ENCODE measurements at regions of chr9 and their contacts with region 1.

Region 1: DNA sequence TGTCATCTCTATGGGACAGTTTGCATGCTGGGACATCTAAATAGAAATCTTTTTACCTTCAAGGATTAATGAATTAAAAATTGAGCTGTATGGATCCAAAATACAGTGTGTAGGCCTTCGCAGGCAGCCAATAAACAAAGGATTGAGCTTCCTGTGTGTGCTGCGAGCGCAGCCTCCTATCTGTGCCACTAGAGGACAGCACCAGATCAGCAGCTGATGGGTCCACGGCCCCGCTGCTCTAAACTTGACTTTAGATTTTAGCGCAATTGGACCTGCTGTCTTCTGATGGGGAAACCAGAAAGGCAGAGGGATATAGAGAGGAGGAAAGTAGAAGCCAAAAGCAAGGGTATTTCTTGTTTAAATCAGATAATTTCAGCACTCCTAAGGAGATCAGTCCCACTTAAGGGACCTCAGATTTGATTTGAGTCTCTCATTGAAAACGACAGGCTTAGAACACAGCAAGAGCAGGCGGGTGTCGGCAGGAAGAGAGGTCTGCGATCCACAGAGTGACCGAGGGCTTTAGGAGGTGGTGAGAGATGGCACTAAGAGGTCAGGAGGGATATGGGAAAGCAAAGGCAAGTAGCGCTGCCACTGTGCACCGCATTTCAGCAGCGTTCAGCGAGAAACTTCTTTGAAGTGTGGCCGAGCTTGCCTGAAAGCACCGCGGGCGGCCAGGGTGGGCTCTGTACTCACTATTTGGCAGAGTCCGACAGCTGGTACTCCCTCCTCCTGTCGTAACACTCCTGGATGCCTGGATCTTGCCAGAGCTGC is 214.3 kb downstream of the GNA14 start:
- DNase-seq: peak; percentile 68
- H3K4me3 ChIP-seq: no peak overlapping the region
- H3K27ac ChIP-seq: no peak overlapping the region
- H3K4me1 ChIP-seq: peaks cover 16% of the 10 kb centered on the region
- H3K27me3 ChIP-seq: no peaks in the 10 kb centered on the region
- CTCF ChIP-seq: peak; percentile 96
- POLR2A ChIP-seq: no peak

Region 2: GRCh38 chr9:77163884-77164283 is 270.0 kb before region 1 on chr9:
- CTCF ChIA-PET with region 1: interaction called, 21 read pairs
- POLR2A ChIA-PET with region 1: no interaction called
- dilution Hi-C with region 1: no loop called
- intact Hi-C with region 1: no loop called
- DNase-seq: peak; percentile 64
- H3K4me3 ChIP-seq: no peak overlapping the region
- H3K27ac ChIP-seq: no peak overlapping the region
- H3K4me1 ChIP-seq: peaks cover 17% of the 10 kb centered on the region
- H3K27me3 ChIP-seq: no peaks in the 10 kb centered on the region
- CTCF ChIP-seq: no peak
- POLR2A ChIP-seq: no peak

Region 3: GRCh38 chr9:77417566-77417965 is 16.3 kb before region 1 on chr9:
- CTCF ChIA-PET with region 1: interaction called, 36 read pairs
- POLR2A ChIA-PET with region 1: no interaction called
- dilution Hi-C with region 1: no loop called
- intact Hi-C with region 1: no loop called
- DNase-seq: peak; percentile 72
- H3K4me3 ChIP-seq: no peak overlapping the region
- H3K27ac ChIP-seq: peak overlapping the region; percentile 24
- H3K4me1 ChIP-seq: peaks cover 45% of the 10 kb centered on the region
- H3K27me3 ChIP-seq: no peaks in the 10 kb centered on the region
- CTCF ChIP-seq: no peak
- POLR2A ChIP-seq: no peak

Region 4: GRCh38 chr9:77488439-77489126 is 54.7 kb after region 1 on chr9:
- CTCF ChIA-PET with region 1: interaction called, 23 read pairs
- POLR2A ChIA-PET with region 1: no interaction called
- dilution Hi-C with region 1: no loop called
- intact Hi-C with region 1: no loop called
- DNase-seq: peak; percentile 18
- H3K4me3 ChIP-seq: no peak overlapping the region
- H3K27ac ChIP-seq: no peak overlapping the region
- H3K4me1 ChIP-seq: no peaks in the 10 kb centered on the region
- H3K27me3 ChIP-seq: no peaks in the 10 kb centered on the region
- CTCF ChIP-seq: peak; percentile 23 to 41
- POLR2A ChIP-seq: no peak

Region 5: DNA sequence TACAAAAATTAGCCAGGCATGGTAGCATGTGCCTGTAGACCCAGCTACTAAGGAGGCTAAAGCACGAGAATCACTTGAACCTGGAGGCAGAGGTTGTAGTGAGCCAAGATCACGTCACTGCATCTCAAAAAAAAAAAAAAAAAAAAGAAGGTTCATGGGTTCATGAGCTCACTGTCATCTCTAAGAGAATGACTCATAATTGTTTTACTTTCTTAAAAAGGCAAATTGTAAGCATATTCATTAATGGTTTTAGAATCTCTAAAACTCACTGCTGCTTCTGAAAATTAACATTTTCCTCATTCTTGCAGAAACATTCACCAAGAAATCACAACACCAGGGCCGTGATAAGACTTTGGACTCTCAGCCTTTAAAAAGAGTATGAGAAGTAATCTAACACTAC is 110.7 kb after region 1 on chr9:
- CTCF ChIA-PET with region 1: no interaction called
- POLR2A ChIA-PET with region 1: no interaction called
- dilution Hi-C with region 1: no loop called
- intact Hi-C with region 1: no loop called
- DNase-seq: no peak
- H3K4me3 ChIP-seq: no peak overlapping the region
- H3K27ac ChIP-seq: no peak overlapping the region
- H3K4me1 ChIP-seq: no peaks in the 10 kb centered on the region
- H3K27me3 ChIP-seq: no peaks in the 10 kb centered on the region
- CTCF ChIP-seq: no peak
- POLR2A ChIP-seq: no peak

Region 6: DNA sequence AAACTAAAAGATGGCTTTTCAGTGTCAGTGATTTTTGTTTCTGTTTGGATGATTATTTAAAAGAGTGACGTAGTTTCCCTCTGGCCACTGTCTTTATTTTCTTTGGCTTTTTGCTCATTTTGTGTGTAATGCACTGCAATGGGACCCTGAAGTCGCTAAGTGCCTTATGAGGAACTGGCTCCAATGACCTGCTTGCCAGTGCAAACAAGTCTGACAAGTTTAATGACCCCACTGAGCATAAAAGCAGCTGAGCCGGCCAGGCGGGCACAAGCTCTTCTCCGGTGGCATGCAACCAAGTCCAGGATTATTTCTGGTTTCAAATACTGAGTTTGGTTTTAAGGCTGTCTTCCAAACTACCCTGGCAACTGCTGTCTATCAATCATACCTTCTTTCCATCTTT is 229.9 kb after region 1 on chr9:
- CTCF ChIA-PET with region 1: interaction called, 11 read pairs
- POLR2A ChIA-PET with region 1: no interaction called
- dilution Hi-C with region 1: no loop called
- intact Hi-C with region 1: no loop called
- DNase-seq: peak; percentile 78
- H3K4me3 ChIP-seq: no peak overlapping the region
- H3K27ac ChIP-seq: no peak overlapping the region
- H3K4me1 ChIP-seq: peaks cover 9% of the 10 kb centered on the region
- H3K27me3 ChIP-seq: no peaks in the 10 kb centered on the region
- CTCF ChIP-seq: no peak
- POLR2A ChIP-seq: no peak

Region 7: DNA sequence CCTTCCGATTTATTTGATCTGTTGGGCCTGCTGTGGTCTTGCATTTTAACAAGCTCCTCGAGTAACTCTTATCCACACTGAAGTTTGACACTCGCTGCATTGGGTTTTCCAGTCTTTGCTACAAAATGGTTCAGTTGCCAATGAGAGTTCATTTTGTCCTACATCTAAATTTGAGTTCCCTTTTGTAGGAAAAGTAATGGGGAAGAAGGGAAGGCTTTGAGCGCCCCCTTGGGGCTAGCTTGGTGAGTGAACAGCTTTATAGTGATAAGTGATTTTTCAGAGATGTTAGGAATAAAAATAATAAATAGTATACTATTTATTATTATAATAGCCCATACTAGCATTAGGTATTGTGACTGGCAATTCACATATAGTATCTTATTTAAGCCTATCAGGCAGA is 687.6 kb after region 1 on chr9:
- CTCF ChIA-PET with region 1: interaction called, 12 read pairs
- POLR2A ChIA-PET with region 1: no interaction called
- dilution Hi-C with region 1: no loop called
- intact Hi-C with region 1: no loop called
- DNase-seq: peak; percentile 76
- H3K4me3 ChIP-seq: no peak overlapping the region
- H3K27ac ChIP-seq: no peak overlapping the region
- H3K4me1 ChIP-seq: no peaks in the 10 kb centered on the region
- H3K27me3 ChIP-seq: no peaks in the 10 kb centered on the region
- CTCF ChIP-seq: peak; percentile 64 to 65
- POLR2A ChIP-seq: no peak

Measured in endothelial cell of umbilical vein (primary cell).